GM23248 (cell line): ENCODE measurements at regions of chr10 and their contacts with region 1.

Region 1: DNA sequence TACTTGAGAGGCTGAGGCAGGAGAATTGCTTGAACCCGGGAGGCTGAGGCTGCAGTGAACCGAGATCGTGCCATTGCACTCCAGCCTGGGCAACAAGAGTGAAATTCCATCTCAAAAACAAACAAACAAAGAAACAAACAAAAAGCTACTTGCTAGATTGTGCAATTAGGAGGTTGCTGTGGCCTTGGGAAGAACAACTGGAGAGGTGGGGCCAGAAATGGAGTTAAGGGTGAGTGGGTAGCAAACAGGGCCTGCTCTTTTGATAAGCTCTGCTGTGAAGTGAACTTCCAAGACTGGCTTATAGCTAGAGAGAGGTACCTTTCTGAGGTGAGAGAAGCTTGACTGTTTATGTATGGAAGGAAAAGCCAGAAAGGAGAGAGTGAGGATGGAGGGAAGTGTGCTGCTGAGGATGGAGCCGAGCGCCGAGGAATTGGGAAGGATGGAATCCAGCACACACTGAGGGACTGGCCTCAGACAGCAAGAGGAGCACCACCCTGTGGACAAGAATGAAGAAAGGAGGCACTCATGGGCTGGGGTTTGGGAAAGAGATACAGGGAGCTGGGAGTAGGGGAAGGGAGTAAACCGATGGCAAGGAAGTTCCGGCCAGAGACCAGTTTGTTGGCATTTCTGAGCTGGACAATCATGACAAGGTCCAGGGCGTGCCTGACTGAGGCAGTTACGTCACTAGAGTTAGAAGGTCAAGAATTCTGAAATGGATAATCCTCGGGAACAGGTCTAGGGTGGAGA is 7.0 kb upstream of the RPEL1 start:
- DNase-seq: peak; percentile 65
- H3K4me3 ChIP-seq: no peak overlapping the region
- H3K27ac ChIP-seq: peak overlapping the region; percentile 9
- H3K4me1 ChIP-seq: peaks cover 8% of the 10 kb centered on the region
- H3K27me3 ChIP-seq: no peaks in the 10 kb centered on the region

Region 2: DNA sequence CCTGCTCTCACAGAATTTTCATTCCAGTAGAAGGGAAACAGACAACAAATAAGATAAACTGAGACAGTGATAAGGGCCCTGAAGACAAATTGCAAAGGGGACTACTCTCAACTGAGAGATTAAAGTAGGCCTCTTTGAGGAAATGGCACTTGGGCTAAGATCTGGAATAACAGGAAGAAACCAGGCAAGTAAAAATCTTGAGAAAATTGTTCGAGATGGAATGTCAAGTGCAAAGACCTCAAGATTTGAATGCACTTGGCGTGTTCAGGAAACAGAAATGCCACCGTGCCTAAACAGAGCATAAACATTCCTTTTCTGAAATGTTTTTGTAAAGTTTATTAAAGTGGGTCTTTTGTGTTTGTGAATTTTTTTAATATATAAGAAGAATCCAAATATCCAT is 1193.4 kb before region 1 on chr10:
- in situ Hi-C with region 1: no loop called
- DNase-seq: no peak
- H3K4me3 ChIP-seq: no peak overlapping the region
- H3K27ac ChIP-seq: no peak overlapping the region
- H3K4me1 ChIP-seq: peaks cover 9% of the 10 kb centered on the region; the same call in 1 of the 2 replicates
- H3K27me3 ChIP-seq: no peaks in the 10 kb centered on the region

Region 3: GRCh38 chr10:102917962-102918816 is 320.5 kb before region 1 on chr10 and contains the start of gene CNNM2:
- in situ Hi-C with region 1: loop called (anchors 10 kb)
- DNase-seq: peak; percentile 100
- H3K4me3 ChIP-seq: peak within 1 kb of the TSS; percentile 87
- H3K27ac ChIP-seq: peak within 1 kb of the TSS; percentile 69
- H3K4me1 ChIP-seq: no peaks in the 10 kb centered on the region
- H3K27me3 ChIP-seq: no peaks in the 10 kb centered on the region
- total RNA-seq, gene CNNM2: 4.0 and 5.7 TPM in 2 replicates